ENCODE measurements at regions of chr9 and their contacts with region 1.

Region 1: DNA sequence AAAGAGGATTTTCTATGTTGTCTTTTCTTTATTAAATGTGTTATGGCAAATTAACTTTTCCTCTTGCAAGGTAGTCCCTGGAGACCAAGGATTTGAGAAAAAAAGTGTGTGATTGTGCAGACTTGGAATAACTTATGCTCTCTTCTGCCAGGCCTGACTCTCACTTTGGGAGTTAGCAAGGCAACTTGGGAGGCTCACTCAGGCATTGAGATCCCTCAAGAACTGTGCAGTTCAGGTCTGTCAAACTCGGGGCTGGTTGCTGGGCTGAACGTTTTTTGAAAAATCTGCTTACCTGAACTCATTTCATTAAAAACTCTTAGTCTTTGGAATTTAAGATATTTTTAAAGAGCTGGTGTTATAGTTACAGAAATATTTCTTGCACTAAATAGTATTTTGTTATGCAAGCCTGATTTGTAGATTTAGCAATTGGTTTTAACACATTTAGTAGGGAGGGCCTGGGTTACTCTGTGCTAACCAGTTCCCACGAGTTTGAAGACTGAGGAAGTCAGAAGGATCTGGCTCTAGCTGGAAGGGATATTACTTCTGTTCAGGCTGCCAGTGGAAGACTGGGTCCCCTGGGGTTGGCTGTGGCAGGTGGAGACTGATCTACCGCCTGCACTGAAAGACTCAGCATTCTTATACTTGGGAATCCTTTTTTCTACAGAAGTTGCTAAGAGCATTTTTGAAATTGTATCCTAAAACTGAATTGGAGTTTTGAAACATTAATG is 150.4 kb upstream of the PCSK5 start:
- DNase-seq: no peak
- ATAC-seq: no peak
- H3K4me3 ChIP-seq: no peak overlapping the region
- H3K27ac ChIP-seq: no peak overlapping the region
- H3K4me1 ChIP-seq: no peaks in the 10 kb centered on the region
- H3K27me3 ChIP-seq: no peaks in the 10 kb centered on the region
- CTCF ChIP-seq: no peak
- POLR2A ChIP-seq: no peak
- RAD21 ChIP-seq: no peak

Region 2: DNA sequence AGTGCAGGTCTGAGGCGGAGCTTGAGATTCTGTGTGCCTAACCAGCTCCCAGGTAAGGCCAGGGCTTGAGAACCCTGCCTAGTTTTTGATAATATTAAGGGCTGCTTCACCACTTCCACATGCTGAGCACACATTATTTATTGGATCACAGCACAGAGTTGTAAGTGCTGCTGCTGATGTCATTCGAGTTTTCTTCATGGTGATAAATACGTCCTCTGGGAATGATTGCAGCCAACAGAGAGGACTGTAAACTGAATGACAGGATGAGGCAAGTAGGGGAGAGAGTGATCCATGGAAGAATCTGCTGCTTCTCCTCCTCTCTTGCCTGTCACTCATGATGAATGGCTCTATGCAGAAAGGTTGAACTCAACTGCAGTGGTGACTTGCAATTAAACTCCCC is 1359.3 kb after region 1 on chr9:
- CTCF ChIA-PET with region 1: no interaction called
- POLR2A ChIA-PET with region 1: no interaction called
- dilution Hi-C with region 1: no loop called
- in situ Hi-C with region 1: no loop called
- intact Hi-C with region 1: loop called (anchors 10 kb)
- DNase-seq: no peak
- ATAC-seq: no peak
- H3K4me3 ChIP-seq: no peak overlapping the region
- H3K27ac ChIP-seq: no peak overlapping the region
- H3K4me1 ChIP-seq: no peaks in the 10 kb centered on the region
- H3K27me3 ChIP-seq: no peaks in the 10 kb centered on the region
- CTCF ChIP-seq: no peak
- POLR2A ChIP-seq: no peak
- RAD21 ChIP-seq: no peak

Measured in IMR-90 (cell line).